Vagina (tissue), 2 donors: ENCODE measurements at regions of chrX and their contacts with region 1.

Region 1: GRCh38 chrX:10972706-10973105 is 138.4 kb upstream of the HCCS start:
- DNase-seq: no peak
- H3K4me3 ChIP-seq: no peak overlapping the region
- H3K27ac ChIP-seq: no peak overlapping the region
- H3K4me1 ChIP-seq: no peaks in the 10 kb centered on the region
- H3K27me3 ChIP-seq: no peaks in the 10 kb centered on the region
- CTCF ChIP-seq: no peak
- POLR2A ChIP-seq: no peak

Region 2: GRCh38 chrX:11010476-11010875 is 37.8 kb after region 1 on chrX:
- intact Hi-C with region 1: loop called (anchors 2 kb)
- DNase-seq: no peak
- H3K4me3 ChIP-seq: no peak overlapping the region
- H3K27ac ChIP-seq: no peak overlapping the region
- H3K4me1 ChIP-seq: no peaks in the 10 kb centered on the region
- H3K27me3 ChIP-seq: no peaks in the 10 kb centered on the region
- CTCF ChIP-seq: no peak
- POLR2A ChIP-seq: no peak

Region 3: GRCh38 chrX:12058087-12058486 is 1085.4 kb after region 1 on chrX:
- intact Hi-C with region 1: no loop called
- DNase-seq: no peak
- H3K4me3 ChIP-seq: no peak overlapping the region
- H3K27ac ChIP-seq: no peak overlapping the region
- H3K4me1 ChIP-seq: no peaks in the 10 kb centered on the region
- H3K27me3 ChIP-seq: no peaks in the 10 kb centered on the region
- CTCF ChIP-seq: no peak
- POLR2A ChIP-seq: no peak